Activated CD8-positive, alpha-beta memory T cell treated with anti-CD3 and anti-CD28 coated beads, Interleukin-2, amount 10 ng/mL, durations not matched to agents 7 days and 5 days (primary cell): ENCODE measurements at regions of chr16 and their contacts with region 1.

Region 1: GRCh38 chr16:69150146-69150865 is 17.9 kb downstream of the UTP4 start:
- DNase-seq: peak; percentile 53
- ATAC-seq: peak; percentile 85
- H3K4me3 Mint-ChIP-seq: no peak overlapping the region
- H3K27ac Mint-ChIP-seq: no peak overlapping the region
- H3K4me1 Mint-ChIP-seq: peaks cover 2% of the 10 kb centered on the region
- H3K27me3 Mint-ChIP-seq: no peaks in the 10 kb centered on the region

Region 2: DNA sequence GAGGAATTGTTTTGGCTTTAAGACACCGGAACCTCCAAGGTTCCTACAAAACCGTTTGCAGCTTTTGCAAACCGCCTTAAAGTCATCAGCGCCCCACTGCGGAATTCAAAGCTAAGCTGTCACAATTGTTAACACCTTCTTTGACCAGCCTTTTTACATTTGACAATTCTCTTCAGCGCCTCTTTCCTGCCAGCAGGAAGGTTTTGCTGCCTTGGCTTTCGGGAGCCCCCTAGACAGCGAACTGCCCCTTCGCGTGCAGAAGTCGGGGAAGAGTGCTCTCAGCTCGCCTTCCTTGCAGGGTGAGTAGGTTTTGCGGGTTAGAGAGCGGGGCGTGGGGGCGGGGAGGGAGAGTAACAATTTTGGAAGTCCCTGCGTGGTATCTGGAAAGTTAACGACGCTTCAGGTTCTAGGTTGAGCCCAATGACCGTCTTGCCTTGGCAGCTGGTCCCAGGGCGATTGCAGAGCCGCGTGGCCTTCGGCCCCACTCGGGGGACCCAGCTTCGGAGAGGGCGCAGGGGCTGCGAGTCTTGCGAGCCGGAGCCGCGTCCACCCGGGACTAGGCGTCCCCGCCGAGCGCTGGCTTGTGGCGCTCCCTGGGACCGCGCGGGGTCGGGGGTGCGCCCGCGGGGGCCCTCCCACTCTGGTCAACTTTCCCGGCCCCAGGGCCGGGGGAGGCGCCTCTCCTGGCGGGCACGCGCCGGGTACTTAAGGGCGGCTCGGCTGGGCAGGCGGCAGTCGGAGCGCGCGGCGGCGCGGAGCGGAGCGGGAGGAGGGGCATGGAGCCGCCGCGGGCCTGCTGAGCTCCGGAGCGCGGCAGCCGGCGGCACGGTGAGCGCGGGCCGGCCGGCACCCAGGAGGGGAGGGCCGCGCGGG is 44.6 kb before region 1 on chr16 and contains the start of gene HAS3:
- CTCF ChIA-PET with region 1: no interaction called
- DNase-seq: peak; percentile 59
- ATAC-seq: peak; percentile 76
- H3K4me3 Mint-ChIP-seq: peak within 1 kb of the TSS; percentile 76
- H3K27ac Mint-ChIP-seq: no peak within 1 kb of the TSS
- H3K4me1 Mint-ChIP-seq: peaks cover 15% of the 10 kb centered on the region
- H3K27me3 Mint-ChIP-seq: peaks cover 48% of the 10 kb centered on the region
- total RNA-seq, gene HAS3: 0.29 to 0.47 TPM

Region 3: DNA sequence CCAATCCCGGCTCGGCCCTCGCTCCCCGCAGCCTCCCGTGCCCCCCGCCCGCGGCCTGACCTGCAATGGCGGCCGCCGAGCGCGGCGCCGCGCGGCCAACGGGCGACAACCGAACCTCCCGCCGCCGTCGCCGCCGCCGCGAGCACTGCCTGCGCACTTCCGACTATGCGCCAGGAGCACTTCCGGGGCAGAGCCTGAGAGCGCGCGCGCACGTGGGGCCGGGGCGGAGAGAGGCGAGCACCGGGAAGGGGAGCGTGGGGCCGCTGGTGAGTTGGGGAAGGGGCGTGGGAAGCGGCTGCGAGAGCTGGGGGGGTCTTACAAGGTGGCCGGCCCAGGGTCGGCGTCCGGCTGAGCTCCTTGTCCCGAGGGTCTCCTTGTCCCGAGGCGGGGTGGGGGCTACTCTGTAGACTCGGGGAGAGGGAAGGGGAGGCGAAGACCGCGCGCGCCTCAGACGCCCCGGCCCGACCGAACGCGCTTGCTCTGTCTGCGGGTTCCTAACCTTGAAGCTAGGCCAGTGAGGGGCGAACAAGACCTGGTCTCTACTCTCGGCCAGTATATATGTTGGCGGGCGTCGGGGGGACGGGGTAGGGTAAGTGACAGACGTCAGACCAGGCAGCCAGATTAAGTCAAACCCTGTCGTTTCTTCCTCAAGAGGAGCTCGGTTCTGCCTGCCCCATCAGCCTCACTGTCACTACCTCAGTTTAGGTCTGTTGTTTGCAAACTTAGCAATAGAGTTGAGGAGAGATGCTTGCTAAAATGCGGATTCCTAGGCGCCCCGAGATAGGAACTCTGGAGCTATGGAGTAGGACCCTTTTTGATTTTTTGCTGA is 17.7 kb before region 1 on chr16 and contains the starts of genes CHTF8 and UTP4:
- CTCF ChIA-PET with region 1: interaction called, 12 read pairs
- DNase-seq: peak; percentile 91
- ATAC-seq: peak; percentile 95
- H3K4me3 Mint-ChIP-seq: peak within 1 kb of the TSS; percentile 95
- H3K27ac Mint-ChIP-seq: peak within 1 kb of the TSS; percentile 87
- H3K4me1 Mint-ChIP-seq: peaks cover 51% of the 10 kb centered on the region
- H3K27me3 Mint-ChIP-seq: no peaks in the 10 kb centered on the region
- total RNA-seq, gene CHTF8: 133 to 147 TPM
- total RNA-seq, gene UTP4: 57.7 to 82.3 TPM

Region 4: GRCh38 chr16:69166221-69166833 is 16.0 kb after region 1 on chr16:
- CTCF ChIA-PET with region 1: interaction called, 22 read pairs
- DNase-seq: peak; percentile 72
- ATAC-seq: peak; percentile 86
- H3K4me3 Mint-ChIP-seq: no peak overlapping the region
- H3K27ac Mint-ChIP-seq: peak overlapping the region; percentile 77
- H3K4me1 Mint-ChIP-seq: peaks cover 31% of the 10 kb centered on the region
- H3K27me3 Mint-ChIP-seq: no peaks in the 10 kb centered on the region

Region 5: DNA sequence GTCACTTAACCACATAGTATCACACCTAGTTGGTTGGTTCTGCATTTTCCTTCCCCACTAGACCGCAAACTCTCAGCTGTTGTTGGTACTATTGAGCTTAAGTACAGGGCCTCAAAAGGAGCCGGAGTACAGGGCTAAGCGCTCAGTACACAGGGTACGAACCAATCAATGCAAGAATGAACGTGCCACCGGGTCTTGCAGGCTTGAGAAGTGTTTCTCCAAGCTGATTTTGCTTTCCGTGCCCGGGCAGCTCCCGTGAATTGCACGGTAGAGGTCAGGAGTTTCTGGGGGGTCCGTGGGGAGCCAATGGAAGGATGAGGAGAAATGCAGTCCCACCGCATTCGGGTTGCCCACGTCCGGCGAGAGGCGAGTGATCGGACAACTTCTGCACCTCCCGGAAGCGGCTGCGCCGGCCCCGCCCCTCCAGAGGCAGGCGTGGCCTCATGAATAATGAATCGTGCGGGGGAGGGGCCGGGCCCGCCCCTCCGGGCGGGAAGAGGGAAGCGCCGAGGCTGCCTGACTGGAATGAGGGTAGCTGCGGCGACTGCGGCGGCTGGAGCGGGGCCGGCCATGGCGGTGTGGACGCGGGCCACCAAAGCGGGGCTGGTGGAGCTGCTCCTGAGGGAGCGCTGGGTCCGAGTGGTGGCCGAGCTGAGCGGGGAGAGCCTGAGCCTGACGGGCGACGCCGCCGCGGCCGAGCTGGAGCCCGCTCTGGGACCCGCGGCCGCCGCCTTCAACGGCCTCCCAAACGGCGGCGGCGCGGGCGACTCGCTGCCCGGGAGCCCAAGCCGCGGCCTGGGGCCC is 36.5 kb after region 1 on chr16 and contains the start of gene SNTB2:
- CTCF ChIA-PET with region 1: interaction called, 11 read pairs
- DNase-seq: peak; percentile 92
- ATAC-seq: peak; percentile 86
- H3K4me3 Mint-ChIP-seq: peak within 1 kb of the TSS; percentile 91
- H3K27ac Mint-ChIP-seq: peak within 1 kb of the TSS; percentile 99
- H3K4me1 Mint-ChIP-seq: peaks cover 51% of the 10 kb centered on the region
- H3K27me3 Mint-ChIP-seq: no peaks in the 10 kb centered on the region
- total RNA-seq, gene SNTB2: 21.5 to 30.6 TPM

Region 6: GRCh38 chr16:69286941-69287713 is 136.8 kb after region 1 on chr16:
- CTCF ChIA-PET with region 1: interaction called, 93 read pairs
- DNase-seq: peak; percentile 46
- ATAC-seq: no peak
- H3K4me3 Mint-ChIP-seq: no peak overlapping the region
- H3K27ac Mint-ChIP-seq: no peak overlapping the region
- H3K4me1 Mint-ChIP-seq: peaks cover 2% of the 10 kb centered on the region
- H3K27me3 Mint-ChIP-seq: no peaks in the 10 kb centered on the region